Activated CD8-positive, alpha-beta T cell treated with anti-CD3 and anti-CD28 coated beads for 36 hours (primary cell): ENCODE measurements at regions of chr1 and their contacts with region 1.

Region 1: DNA sequence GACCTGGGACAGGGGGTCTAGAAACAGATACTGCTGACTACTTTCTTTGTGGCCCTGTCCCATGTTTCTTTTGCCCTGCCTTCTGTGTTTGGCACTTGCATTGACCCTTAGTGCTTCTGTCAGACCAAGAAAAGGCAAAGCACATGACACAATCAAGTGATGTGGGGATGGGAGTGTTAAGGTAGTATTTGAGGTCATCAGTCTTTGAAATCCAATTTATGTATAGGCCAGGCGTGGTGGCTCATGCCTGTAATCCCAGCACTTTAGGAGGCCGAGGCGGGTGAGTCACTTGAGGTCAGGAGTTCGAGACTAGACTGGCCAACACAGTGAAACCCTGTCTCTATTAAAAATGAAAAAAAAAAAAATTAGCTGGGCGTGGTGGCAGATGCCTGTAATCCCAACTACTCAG is 26.0 kb downstream of the SERBP1 start:
- DNase-seq: no peak
- ATAC-seq: no peak
- H3K4me3 Mint-ChIP-seq: no peak overlapping the region
- H3K27ac Mint-ChIP-seq: no peak overlapping the region
- H3K4me1 Mint-ChIP-seq: peaks cover 14% of the 10 kb centered on the region
- H3K27me3 Mint-ChIP-seq: no peaks in the 10 kb centered on the region
- CTCF ChIP-seq: no peak

Region 2: GRCh38 chr1:66954208-66954607 is 450.0 kb before region 1 on chr1:
- CTCF ChIA-PET with region 1: no interaction called
- POLR2A ChIA-PET with region 1: no interaction called
- intact Hi-C with region 1: no loop called
- DNase-seq: no peak
- ATAC-seq: no peak
- H3K4me3 Mint-ChIP-seq: no peak overlapping the region
- H3K27ac Mint-ChIP-seq: peak overlapping the region; percentile 10
- H3K4me1 Mint-ChIP-seq: peaks cover 32% of the 10 kb centered on the region
- H3K27me3 Mint-ChIP-seq: no peaks in the 10 kb centered on the region
- CTCF ChIP-seq: no peak

Region 3: DNA sequence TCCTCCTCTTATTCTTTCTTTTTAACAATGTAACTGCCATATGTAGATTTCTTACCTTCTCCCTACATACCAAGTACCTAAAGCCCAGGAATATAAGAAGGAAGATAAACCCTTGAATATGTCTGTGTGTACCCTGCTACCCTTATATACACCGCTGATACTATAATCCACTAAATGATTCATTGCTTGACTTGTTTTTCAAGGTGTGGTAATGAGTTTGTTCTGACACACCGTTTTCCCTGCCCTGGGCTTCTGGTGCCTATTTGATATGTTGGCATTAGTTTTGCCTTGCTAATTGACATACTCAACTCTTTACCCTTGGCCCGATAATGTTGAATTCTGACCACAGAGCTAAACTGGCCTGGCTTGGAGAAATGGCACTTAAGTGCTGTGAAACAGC is 173.7 kb before region 1 on chr1:
- CTCF ChIA-PET with region 1: interaction called, 3 read pairs
- POLR2A ChIA-PET with region 1: no interaction called
- intact Hi-C with region 1: loop called (anchors 5 kb)
- DNase-seq: no peak
- ATAC-seq: no peak
- H3K4me3 Mint-ChIP-seq: no peak overlapping the region
- H3K27ac Mint-ChIP-seq: no peak overlapping the region
- H3K4me1 Mint-ChIP-seq: peaks cover 9% of the 10 kb centered on the region
- H3K27me3 Mint-ChIP-seq: peaks cover 5% of the 10 kb centered on the region
- CTCF ChIP-seq: no peak

Region 4: DNA sequence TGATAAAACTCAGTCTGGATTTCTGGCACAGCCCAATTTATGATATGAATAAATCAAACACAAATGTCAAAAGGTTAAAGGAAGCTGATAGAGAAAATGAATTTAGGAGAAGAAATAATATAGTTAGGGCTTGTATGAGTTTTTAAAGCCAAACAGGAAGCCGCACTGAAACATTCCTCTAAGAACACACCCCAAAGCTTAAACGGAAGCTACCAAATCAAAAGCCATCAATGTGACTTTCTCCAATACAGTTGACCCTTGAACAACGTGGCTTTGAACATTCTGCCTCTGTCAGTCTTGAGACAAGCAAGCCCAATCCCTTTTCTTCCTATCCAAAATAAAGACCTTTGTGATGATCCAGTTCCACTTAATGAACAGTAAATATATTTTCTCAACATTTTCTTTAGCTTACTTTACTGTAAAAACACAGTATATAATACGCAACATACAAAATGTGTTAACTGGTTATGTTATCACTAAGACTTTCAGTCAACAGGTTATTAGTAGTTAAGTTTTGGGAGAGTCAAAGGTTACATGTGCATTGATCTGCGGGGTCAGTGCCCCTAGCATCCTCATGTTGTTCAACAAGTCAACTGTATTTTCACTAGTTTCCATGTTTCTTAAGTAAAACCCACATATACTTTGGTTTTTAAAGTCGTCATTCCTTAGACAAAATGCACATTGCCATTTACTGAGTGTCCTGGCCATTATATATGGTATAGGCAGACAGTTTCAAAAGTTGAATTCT is 14.8 kb after region 1 on chr1:
- CTCF ChIA-PET with region 1: no interaction called
- POLR2A ChIA-PET with region 1: interaction called, 36 read pairs
- intact Hi-C with region 1: no loop called
- DNase-seq: no peak
- ATAC-seq: no peak
- H3K4me3 Mint-ChIP-seq: no peak overlapping the region
- H3K27ac Mint-ChIP-seq: peak overlapping the region; percentile 71
- H3K4me1 Mint-ChIP-seq: peaks cover 76% of the 10 kb centered on the region
- H3K27me3 Mint-ChIP-seq: no peaks in the 10 kb centered on the region
- CTCF ChIP-seq: no peak